Activated CD4-positive, alpha-beta T cell treated with anti-CD3 and anti-CD28 coated beads, Interleukin-2, amount 10 ng/mL, durations not matched to agents 7 days and 5 days (primary cell): ENCODE measurements at regions of chr14 and their contacts with region 1.

Region 1: GRCh38 chr14:20970983-20971704 is 15.9 kb downstream of the RNASE2 start:
- DNase-seq: peak; percentile 77
- H3K4me3 Mint-ChIP-seq: peak overlapping the region; percentile 81
- H3K27ac Mint-ChIP-seq: peak overlapping the region; percentile 33
- H3K4me1 Mint-ChIP-seq: peaks cover 12% of the 10 kb centered on the region
- H3K27me3 Mint-ChIP-seq: peaks cover 40% of the 10 kb centered on the region

Region 2: DNA sequence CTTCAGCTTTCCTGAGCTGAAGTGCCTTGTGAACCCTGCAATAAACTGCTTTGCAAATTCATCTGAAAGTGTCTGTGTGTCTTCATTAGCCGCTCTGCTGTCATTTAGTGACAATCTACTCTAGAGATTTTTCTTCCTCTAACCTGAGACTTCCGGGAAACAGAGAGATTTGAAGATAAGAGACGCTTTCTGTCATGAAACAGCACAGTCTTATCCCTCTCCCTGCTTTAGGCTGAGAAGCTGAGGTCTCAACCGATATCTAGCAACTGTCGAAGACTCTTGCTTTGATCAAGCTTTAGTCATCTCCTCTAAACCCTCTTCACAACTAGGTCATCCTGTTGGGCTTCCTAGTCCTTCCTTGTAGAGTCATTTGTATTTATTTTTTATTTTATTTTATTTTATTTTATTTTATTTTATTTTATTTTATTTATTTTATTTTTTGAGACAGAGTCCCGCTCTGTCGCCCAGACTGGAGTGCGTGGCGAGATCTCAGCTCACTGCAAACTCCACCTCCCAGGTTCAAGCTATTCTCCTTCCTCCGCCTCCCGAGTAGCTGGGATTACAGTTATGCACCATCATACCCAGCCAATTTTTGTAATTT is 14.7 kb before region 1 on chr14:
- CTCF ChIA-PET with region 1: interaction called, 28 read pairs
- POLR2A ChIA-PET with region 1: no interaction called
- DNase-seq: peak; percentile 9
- H3K4me3 Mint-ChIP-seq: no peak overlapping the region
- H3K27ac Mint-ChIP-seq: peak overlapping the region; percentile 62
- H3K4me1 Mint-ChIP-seq: peaks cover 42% of the 10 kb centered on the region
- H3K27me3 Mint-ChIP-seq: peaks cover 4% of the 10 kb centered on the region

Region 3: GRCh38 chr14:20982646-20983369 is 11.7 kb after region 1 on chr14:
- CTCF ChIA-PET with region 1: interaction called, 39 read pairs
- POLR2A ChIA-PET with region 1: no interaction called
- DNase-seq: no peak
- H3K4me3 Mint-ChIP-seq: no peak overlapping the region
- H3K27ac Mint-ChIP-seq: no peak overlapping the region
- H3K4me1 Mint-ChIP-seq: peaks cover 6% of the 10 kb centered on the region
- H3K27me3 Mint-ChIP-seq: peaks cover 12% of the 10 kb centered on the region

Region 4: DNA sequence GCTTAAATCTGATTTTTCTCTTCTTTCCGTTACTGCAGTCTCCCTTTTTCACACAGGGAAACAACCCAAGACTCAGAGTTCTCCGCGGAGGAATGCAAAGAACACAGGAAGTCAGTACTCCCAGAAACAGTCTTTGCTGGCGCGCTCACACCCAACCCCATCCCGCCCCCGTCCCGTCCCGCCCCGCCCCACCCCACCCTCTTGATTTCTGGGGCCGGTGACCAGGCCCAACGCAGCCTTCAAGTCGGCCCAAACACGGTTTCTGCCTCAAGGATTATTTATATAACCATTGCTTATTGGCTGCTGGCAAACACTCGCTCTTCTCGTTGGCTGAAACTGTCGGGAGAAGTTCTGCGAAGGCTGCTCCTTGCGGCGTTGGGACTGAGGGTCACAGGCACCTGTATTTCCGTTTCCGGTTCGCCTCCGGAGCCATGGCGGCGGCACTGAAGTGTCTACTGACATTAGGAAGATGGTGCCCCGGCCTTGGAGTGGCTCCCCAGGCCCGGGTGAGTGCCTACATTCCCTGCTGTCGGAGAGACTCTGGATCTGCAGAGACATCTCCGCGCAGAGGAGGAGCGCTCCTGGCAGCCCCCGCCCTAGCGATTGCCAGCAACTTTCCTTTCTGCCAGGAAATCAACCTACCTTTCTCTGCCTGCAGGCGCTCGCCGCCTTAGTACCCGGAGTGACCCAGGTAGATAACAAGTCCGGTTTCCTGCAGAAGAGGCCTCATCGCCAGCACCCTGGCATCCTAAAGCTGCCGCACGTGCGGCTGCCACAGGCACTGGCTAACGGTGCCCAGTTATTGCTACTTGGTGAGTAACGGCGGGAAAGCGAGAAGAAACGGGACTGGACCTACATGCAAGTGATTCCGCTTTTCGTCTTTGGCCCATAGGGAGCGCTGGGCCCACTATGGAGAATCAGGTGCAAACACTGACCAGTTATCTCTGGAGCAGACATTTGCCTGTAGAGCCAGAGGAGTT is 18.7 kb after region 1 on chr14 and contains the start of gene METTL17:
- CTCF ChIA-PET with region 1: interaction called, 21 read pairs
- POLR2A ChIA-PET with region 1: no interaction called
- DNase-seq: peak; percentile 93
- H3K4me3 Mint-ChIP-seq: peak within 1 kb of the TSS; percentile 91
- H3K27ac Mint-ChIP-seq: peak within 1 kb of the TSS; percentile 90
- H3K4me1 Mint-ChIP-seq: peaks cover 44% of the 10 kb centered on the region
- H3K27me3 Mint-ChIP-seq: no peaks in the 10 kb centered on the region
- total RNA-seq, gene METTL17: 97.4 to 99.6 TPM

Region 5: GRCh38 chr14:20998664-20999366 is 27.7 kb after region 1 on chr14 and contains the start of gene SLC39A2:
- CTCF ChIA-PET with region 1: interaction called, 21 read pairs
- POLR2A ChIA-PET with region 1: no interaction called
- DNase-seq: no peak
- H3K4me3 Mint-ChIP-seq: no peak within 1 kb of the TSS
- H3K27ac Mint-ChIP-seq: no peak within 1 kb of the TSS
- H3K4me1 Mint-ChIP-seq: peaks cover 19% of the 10 kb centered on the region
- H3K27me3 Mint-ChIP-seq: no peaks in the 10 kb centered on the region
- total RNA-seq, gene SLC39A2: 0.25 to 0.37 TPM

Region 6: DNA sequence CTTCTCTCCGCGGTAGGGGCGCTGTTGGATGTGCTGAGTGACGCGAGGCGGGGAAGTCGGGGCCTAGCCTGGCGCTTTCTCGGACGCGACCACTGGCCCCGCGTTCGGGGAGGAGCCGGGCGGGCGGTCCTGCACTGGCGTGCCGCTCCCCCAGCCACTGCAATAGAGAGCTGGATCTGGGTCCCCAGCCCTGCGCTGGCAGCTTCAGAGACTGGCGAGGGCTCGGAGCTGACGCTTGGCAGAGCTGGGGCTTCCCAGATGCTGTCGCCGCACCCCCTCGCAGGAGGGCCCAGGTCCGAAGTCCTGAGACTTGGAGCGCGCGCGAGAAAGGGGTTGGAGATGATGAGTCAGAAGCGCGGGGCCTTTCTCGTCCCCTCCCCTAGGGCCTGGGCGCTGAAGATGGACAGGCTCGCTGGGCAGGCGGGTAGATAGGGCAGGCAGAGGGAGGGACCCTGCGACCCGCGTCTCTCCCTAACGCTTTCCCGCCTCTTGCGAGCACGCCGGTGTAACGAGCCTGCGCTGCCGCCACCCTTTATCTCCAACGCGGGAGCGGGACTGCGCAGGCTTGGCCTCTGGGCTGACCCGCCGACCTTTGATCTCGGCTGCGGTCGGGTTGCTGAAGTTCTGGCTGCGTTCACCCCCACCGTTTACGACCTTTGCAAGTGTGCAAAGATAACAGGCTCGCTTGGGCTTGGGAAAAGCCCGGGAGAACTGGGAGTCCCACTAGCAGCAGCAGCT is 132.7 kb after region 1 on chr14:
- CTCF ChIA-PET with region 1: interaction called, 12 read pairs
- POLR2A ChIA-PET with region 1: no interaction called
- DNase-seq: peak; percentile 97
- H3K4me3 Mint-ChIP-seq: peak overlapping the region; percentile 87
- H3K27ac Mint-ChIP-seq: peak overlapping the region; percentile 93
- H3K4me1 Mint-ChIP-seq: peaks cover 44% of the 10 kb centered on the region
- H3K27me3 Mint-ChIP-seq: peaks cover 7% of the 10 kb centered on the region

Region 7: DNA sequence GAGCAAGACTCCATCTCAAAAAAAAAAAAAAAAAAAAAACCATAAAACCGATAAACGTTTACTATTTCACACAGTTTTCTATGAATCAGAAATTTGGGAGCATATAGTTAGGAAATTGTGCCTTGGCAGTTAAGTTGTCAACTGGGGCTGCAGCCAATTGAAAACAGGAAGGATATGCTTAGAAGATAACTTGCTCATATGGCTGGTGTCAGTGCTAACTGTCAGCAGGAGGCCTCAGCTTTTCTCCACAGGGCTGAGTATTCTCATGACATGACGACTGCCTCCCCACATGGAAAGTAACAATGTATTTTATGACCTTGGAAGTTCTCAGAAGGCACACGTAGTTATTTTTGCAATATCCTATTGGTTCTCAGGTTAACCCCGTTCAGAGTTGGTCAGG is 214.3 kb after region 1 on chr14:
- CTCF ChIA-PET with region 1: no interaction called
- POLR2A ChIA-PET with region 1: no interaction called
- DNase-seq: no peak
- H3K4me3 Mint-ChIP-seq: no peak overlapping the region
- H3K27ac Mint-ChIP-seq: peak overlapping the region; percentile 6
- H3K4me1 Mint-ChIP-seq: no peaks in the 10 kb centered on the region
- H3K27me3 Mint-ChIP-seq: peaks cover 19% of the 10 kb centered on the region